ENCODE measurements at regions of chr7 and their contacts with region 1.

Region 1: GRCh38 chr7:130069978-130070860 is at the start of gene KLHDC10:
- DNase-seq: peak; percentile 97
- ATAC-seq: peak; percentile 97
- H3K4me3 Mint-ChIP-seq: peak within 1 kb of the TSS; percentile 86
- H3K27ac Mint-ChIP-seq: peak within 1 kb of the TSS; percentile 85
- H3K4me1 Mint-ChIP-seq: peaks cover 28% of the 10 kb centered on the region
- H3K27me3 Mint-ChIP-seq: peaks cover 2% of the 10 kb centered on the region
- total RNA-seq, gene KLHDC10: 15.7 to 18.1 TPM

Region 2: DNA sequence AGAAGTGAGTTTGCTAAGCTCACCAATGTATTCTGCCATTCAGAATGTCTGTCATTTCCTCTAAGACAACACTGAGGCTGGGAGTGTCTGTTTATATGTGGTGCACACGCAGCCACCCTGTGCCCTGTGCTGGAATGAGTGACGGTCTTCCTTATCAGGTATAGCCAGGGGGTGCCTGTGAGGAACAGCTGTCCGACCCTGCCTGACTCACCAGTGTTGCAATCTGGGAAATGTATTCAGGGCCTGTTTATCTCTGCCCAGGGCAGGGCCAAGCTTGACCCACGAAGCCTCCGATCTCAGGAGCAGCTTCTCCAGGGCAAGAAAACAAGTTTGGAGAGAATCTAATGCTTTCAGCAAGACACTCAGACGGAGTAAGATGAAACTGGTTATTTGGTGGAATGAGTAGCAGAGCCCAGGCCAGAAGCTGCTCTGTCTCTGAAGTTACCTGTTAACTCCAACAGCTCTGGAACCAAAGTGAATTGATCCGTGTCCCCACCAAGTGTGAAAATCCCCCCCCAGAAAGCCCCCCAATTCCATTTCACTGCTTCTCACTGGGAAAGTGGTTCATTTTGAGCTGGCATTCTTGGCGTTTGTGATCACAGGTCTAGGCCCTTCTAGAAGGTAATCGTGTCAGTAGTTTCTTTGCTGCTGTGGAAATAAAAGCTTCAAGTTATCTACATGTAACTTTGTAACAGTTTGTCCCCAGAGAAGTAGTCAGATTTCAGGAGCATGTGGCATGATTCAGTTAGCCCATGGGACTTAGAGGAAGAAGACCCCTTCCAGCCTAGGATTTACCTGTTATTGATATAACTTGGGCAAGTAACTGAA is 111.4 kb before region 1 on chr7:
- CTCF ChIA-PET with region 1: no interaction called
- POLR2A ChIA-PET with region 1: no interaction called
- DNase-seq: no peak
- ATAC-seq: no peak
- H3K4me3 Mint-ChIP-seq: no peak overlapping the region
- H3K27ac Mint-ChIP-seq: no peak overlapping the region
- H3K4me1 Mint-ChIP-seq: no peaks in the 10 kb centered on the region
- H3K27me3 Mint-ChIP-seq: peaks cover 8% of the 10 kb centered on the region

Region 3: GRCh38 chr7:130021105-130021834 is 48.9 kb before region 1 on chr7:
- CTCF ChIA-PET with region 1: no interaction called
- POLR2A ChIA-PET with region 1: no interaction called
- DNase-seq: no peak
- ATAC-seq: no peak
- H3K4me3 Mint-ChIP-seq: no peak overlapping the region
- H3K27ac Mint-ChIP-seq: no peak overlapping the region
- H3K4me1 Mint-ChIP-seq: no peaks in the 10 kb centered on the region
- H3K27me3 Mint-ChIP-seq: no peaks in the 10 kb centered on the region

Region 4: DNA sequence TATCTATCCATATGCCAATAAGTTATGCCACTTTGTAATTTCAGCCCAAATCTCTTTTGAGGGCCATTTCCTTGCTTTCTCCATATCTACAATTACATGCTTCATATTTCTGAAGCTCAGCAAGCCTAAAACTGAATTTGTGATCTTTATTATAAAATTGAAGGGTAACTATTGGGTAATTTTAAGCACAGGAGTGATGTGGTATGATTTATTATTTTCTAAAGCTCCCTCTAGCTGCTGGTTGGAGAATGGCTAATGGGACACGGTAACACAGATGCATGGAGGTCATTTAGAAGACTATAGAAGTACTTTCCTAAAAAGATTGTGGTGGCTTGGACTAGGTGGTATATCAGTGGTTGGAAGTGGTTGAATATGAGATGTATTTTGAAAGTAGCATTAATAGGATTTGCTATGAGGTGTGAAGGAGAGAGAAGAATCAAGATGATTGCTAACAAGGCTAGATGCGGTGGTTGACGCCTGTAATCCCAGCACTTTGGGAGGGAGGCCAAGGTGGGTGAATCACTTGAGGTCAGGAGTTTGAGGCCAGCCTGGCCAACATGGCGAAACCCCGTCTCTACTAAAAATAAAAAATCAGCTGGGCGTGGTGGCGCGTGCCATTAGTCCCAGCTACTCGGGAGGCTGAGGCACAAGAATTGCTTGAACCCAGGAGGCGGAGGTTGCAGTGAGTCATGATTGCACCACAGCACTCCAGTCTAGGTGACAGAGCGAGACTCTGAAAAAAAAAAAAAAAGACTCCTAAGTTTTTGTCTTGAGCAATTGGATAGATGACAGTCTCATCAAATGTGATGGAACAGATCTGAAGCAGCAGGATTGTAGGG is 14.0 kb after region 1 on chr7:
- CTCF ChIA-PET with region 1: interaction called, 15 read pairs
- POLR2A ChIA-PET with region 1: no interaction called
- DNase-seq: no peak
- ATAC-seq: peak; percentile 53
- H3K4me3 Mint-ChIP-seq: no peak overlapping the region
- H3K27ac Mint-ChIP-seq: no peak overlapping the region
- H3K4me1 Mint-ChIP-seq: no peaks in the 10 kb centered on the region
- H3K27me3 Mint-ChIP-seq: no peaks in the 10 kb centered on the region

Region 5: GRCh38 chr7:130227883-130228575 is 157.8 kb after region 1 on chr7:
- CTCF ChIA-PET with region 1: no interaction called
- POLR2A ChIA-PET with region 1: no interaction called
- DNase-seq: no peak
- ATAC-seq: no peak
- H3K4me3 Mint-ChIP-seq: no peak overlapping the region
- H3K27ac Mint-ChIP-seq: no peak overlapping the region
- H3K4me1 Mint-ChIP-seq: peaks cover 2% of the 10 kb centered on the region
- H3K27me3 Mint-ChIP-seq: peaks cover 5% of the 10 kb centered on the region

Region 6: GRCh38 chr7:130242198-130243014 is 172.2 kb after region 1 on chr7:
- CTCF ChIA-PET with region 1: interaction called, 17 read pairs
- POLR2A ChIA-PET with region 1: no interaction called
- DNase-seq: peak; percentile 69
- ATAC-seq: peak; percentile 90
- H3K4me3 Mint-ChIP-seq: no peak overlapping the region
- H3K27ac Mint-ChIP-seq: no peak overlapping the region
- H3K4me1 Mint-ChIP-seq: peaks cover 11% of the 10 kb centered on the region
- H3K27me3 Mint-ChIP-seq: peaks cover 4% of the 10 kb centered on the region

Region 7: GRCh38 chr7:130758429-130759056 is 688.3 kb after region 1 on chr7:
- CTCF ChIA-PET with region 1: interaction called, 27 read pairs
- POLR2A ChIA-PET with region 1: no interaction called
- DNase-seq: no peak
- ATAC-seq: peak; percentile 33
- H3K4me3 Mint-ChIP-seq: no peak overlapping the region
- H3K27ac Mint-ChIP-seq: no peak overlapping the region
- H3K4me1 Mint-ChIP-seq: no peaks in the 10 kb centered on the region
- H3K27me3 Mint-ChIP-seq: peaks cover 15% of the 10 kb centered on the region

Measured in activated CD8-positive, alpha-beta T cell treated with anti-CD3 and anti-CD28 coated beads, Interleukin-2, amount 10 ng/mL, durations not matched to agents 7 days and 5 days (primary cell).